ENCODE measurements at regions of chr11 and their contacts with region 1.

Region 1: GRCh38 chr11:77019976-77020595 is 14.1 kb upstream of the B3GNT6 start:
- DNase-seq: no peak
- H3K4me3 ChIP-seq: no peak overlapping the region
- H3K27ac ChIP-seq: peak overlapping the region; percentile 20
- H3K4me1 ChIP-seq: no peaks in the 10 kb centered on the region
- H3K27me3 ChIP-seq: no peaks in the 10 kb centered on the region
- CTCF ChIP-seq: no peak

Region 2: DNA sequence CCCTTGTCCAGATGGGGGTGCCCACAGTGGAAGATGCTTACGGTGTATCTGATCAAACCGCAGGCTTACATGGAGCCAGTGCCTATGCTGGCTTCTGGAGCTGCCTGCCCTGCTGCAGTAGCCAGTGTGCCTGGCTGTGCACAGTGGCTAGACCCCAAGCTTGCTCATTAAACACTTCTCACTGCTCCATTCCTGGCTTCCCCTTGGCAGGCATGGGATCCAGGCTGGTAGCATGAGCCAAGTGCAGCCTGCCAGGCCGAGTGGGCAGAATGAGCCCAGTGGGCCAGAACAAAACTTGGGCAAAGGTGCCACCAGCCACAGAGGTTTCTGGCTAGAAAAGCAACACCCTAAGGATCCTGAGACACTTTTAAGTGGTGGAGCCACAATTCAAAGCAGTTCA is 41.3 kb before region 1 on chr11:
- intact Hi-C with region 1: loop called (anchors 10 kb)
- DNase-seq: no peak
- H3K4me3 ChIP-seq: no peak overlapping the region
- H3K27ac ChIP-seq: no peak overlapping the region
- H3K4me1 ChIP-seq: no peaks in the 10 kb centered on the region
- H3K27me3 ChIP-seq: no peaks in the 10 kb centered on the region
- CTCF ChIP-seq: no peak

Measured in colonic mucosa (tissue), 4 donors.